Dendritic cell treated with granulocyte-macrophage colony-stimulating factor and Interleukin-4, amounts not matched to agents 40 ng/mL and 50 ng/mL, for 4 days (primary cell): ENCODE measurements at regions of chr3 and their contacts with region 1.

Region 1: GRCh38 chr3:98329392-98330124 is 24.1 kb upstream of the OR5K4 start:
- H3K4me3 Mint-ChIP-seq: no peak overlapping the region
- H3K27ac Mint-ChIP-seq: no peak overlapping the region
- H3K4me1 Mint-ChIP-seq: no peaks in the 10 kb centered on the region
- H3K27me3 Mint-ChIP-seq: peaks cover 3% of the 10 kb centered on the region

Region 2: GRCh38 chr3:97793420-97794019 is 536.0 kb before region 1 on chr3:
- intact Hi-C with region 1: loop called (anchors 10 kb)
- H3K4me3 Mint-ChIP-seq: no peak overlapping the region
- H3K27ac Mint-ChIP-seq: no peak overlapping the region
- H3K4me1 Mint-ChIP-seq: no peaks in the 10 kb centered on the region
- H3K27me3 Mint-ChIP-seq: no peaks in the 10 kb centered on the region

Region 3: GRCh38 chr3:98039322-98040024 is 290.1 kb before region 1 on chr3:
- intact Hi-C with region 1: loop called (anchors 1 kb)
- H3K4me3 Mint-ChIP-seq: peak overlapping the region; percentile 71
- H3K27ac Mint-ChIP-seq: no peak overlapping the region
- H3K4me1 Mint-ChIP-seq: peaks cover 5% of the 10 kb centered on the region
- H3K27me3 Mint-ChIP-seq: peaks cover 10% of the 10 kb centered on the region

Region 4: DNA sequence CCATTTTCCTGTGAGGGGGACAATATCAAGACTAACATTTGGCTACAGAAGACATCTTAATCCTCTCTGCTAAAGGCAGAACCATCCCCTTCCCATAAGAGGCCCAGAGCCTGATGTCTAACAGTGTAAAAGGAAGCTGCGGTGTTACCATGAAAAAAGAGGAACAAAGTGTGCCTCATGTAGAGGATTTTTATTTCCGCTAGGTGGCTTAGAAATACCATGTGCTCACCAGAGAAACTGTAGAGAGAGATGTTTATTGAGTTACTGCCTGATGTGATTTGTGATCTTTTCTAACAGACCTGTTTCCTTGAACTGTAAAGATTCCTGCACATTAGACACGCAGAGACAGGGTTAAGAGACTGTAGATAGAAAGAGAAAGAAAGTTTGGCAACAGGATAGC is 141.0 kb before region 1 on chr3:
- intact Hi-C with region 1: loop called (anchors 5 kb)
- H3K4me3 Mint-ChIP-seq: no peak overlapping the region
- H3K27ac Mint-ChIP-seq: no peak overlapping the region
- H3K4me1 Mint-ChIP-seq: peaks cover 5% of the 10 kb centered on the region
- H3K27me3 Mint-ChIP-seq: peaks cover 6% of the 10 kb centered on the region